ENCODE measurements at regions of chr10 and their contacts with region 1.

Region 1: GRCh38 chr10:110285501-110285900 is 19.2 kb downstream of the SMNDC1 start:
- DNase-seq: no peak
- ATAC-seq: no peak
- H3K4me3 ChIP-seq: no peak overlapping the region
- H3K27ac ChIP-seq: no peak overlapping the region
- H3K4me1 ChIP-seq: no peaks in the 10 kb centered on the region
- H3K27me3 ChIP-seq: no peaks in the 10 kb centered on the region
- CTCF ChIP-seq: no peak
- POLR2A ChIP-seq: no peak

Region 2: DNA sequence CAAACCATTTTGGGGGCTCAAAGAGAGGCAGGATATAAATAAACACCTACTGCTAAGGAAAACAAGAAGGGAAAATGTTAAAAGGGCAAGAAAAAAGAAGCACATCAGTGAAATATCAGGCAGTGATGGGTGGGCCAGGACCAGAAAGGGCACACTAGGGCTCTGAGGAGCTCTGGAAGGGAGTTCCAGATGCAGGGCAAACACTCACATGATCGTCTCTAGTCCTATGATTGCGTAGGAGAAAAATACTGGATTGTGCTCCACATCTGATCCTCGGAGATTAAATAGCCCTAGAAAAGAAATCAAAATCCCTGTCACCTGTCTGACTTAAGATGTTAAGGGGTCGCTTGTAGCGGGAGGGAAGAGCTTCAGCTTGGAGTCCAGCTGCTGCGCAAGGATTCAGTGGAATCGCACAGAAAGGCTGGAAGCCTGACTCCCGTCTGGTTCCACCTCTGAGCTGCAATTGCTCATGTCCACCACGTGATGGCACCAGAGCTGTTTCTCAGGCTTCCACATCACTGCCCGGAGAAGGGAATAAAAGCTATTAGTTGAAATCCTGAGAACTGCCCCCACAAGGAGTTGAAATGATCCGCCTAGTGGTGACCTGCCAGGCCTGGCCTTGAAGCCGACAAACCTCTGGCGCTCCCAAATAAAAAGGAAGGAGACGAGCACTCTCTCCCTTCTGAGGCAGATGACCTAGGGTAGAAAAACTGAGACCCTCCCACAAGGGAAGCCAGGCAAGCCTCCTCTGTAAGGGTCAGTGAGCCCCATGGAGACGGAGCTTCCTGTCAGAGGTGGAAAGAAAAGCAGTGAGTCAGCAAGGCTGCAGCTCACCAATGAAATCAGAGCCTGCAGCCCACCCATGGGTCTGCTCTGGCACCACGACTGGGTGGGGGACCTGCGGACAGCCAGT is 401.4 kb before region 1 on chr10:
- intact Hi-C with region 1: loop called in 1 of 2 experiments (anchors 10 kb)
- DNase-seq: peak; percentile 54 to 73 (median 69)
- ATAC-seq: peak; percentile 94 to 99 (median 98)
- H3K4me3 ChIP-seq: no peak overlapping the region
- H3K27ac ChIP-seq: peak overlapping the region in 1 of 3 donors; percentile 2
- H3K4me1 ChIP-seq: peaks cover 0 to 3% (median 0%) of the 10 kb centered on the region in 4 donors
- H3K27me3 ChIP-seq: no peaks in the 10 kb centered on the region
- CTCF ChIP-seq: peak; percentile 92 to 96 (median 94)
- POLR2A ChIP-seq: no peak

Region 3: DNA sequence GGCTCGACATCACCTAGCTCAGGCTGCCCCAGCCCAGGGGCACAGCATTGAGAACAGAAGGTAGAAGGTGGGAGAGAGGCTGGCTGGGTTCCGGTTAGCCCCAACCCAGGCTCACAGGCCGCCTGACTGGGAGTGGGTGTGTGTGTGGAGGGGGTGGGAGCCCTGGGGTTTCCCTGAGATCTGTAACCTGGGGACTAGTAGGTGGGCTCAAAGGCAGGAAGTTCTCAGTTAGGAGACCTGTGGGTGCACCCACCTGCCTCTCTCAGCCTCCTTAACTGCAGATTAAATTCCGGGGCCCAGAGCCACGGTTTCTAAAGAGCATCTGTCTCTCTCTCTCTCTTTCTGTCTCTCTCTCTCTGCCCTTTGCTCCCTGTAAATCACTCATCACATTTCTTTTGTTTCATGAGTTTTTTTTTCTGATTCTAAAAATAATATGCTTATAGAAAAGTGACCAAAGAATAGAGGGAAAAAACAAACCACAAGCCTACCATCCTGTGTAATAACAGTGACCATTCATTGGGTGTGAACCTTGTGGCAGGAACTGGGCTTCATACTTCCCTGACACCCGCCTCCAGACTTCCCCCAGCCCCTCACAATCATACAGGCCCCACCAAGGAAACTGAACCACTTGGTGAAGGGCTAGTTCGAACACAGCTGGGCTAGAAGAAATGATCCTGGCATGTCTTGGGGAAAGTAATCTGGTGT is 102.6 kb after region 1 on chr10:
- intact Hi-C with region 1: no loop called
- DNase-seq: no peak
- ATAC-seq: peak in 3 of 4 donors; percentile 9 to 34 (median 25)
- H3K4me3 ChIP-seq: no peak overlapping the region
- H3K27ac ChIP-seq: no peak overlapping the region
- H3K4me1 ChIP-seq: peaks cover 0 to 3% (median 0%) of the 10 kb centered on the region in 4 donors
- H3K27me3 ChIP-seq: no peaks in the 10 kb centered on the region
- CTCF ChIP-seq: no peak
- POLR2A ChIP-seq: no peak

Measured in right lobe of liver (tissue), 6 donors.